CD8-positive, alpha-beta T cell (primary cell): ENCODE measurements at regions of chr21 and their contacts with region 1.

Region 1: DNA sequence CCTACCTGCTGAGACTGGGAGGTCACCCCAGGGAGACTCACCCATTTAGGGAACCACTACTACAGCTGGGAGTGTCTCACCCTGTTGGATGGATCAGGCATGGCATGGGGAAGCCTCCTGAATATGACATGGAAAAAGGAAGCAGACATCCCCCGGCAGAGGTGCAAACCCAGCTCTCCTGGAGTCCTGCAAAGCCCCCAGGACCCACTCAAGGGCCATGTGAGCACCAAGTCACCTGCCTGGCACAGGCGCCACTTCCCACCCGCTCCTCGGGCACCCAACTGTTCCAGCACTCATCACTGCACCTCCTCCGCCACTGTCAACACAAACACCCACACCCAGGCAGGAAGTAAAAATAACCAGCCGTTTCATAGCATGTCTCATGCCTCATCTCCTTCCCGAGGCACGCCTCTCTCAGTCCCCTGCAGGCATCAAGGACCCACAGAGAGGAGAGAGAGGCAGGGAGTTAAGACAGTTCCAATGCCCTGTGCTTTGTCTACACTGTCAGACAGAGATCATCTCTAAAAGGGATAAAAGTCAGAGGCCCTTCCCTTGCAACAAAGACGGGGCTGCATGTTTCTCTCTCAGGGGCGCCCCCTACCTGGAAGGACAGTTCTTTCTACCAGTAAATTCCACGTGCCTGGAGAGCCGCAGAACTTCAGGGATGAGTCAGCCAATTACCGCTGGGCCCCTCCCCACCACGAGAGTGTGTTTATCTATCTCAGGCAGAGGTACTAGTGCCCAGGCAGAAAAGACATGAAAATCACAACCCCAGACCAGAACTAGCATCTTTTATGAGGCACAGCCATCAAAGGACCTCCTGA is 150.1 kb upstream of the SOD1 start:
- DNase-seq: peak; percentile 29 to 74 (median 61)
- ATAC-seq: peak; percentile 81
- H3K4me3 ChIP-seq: no peak overlapping the region
- H3K4me3 Mint-ChIP-seq: peak overlapping the region; percentile 33
- H3K27ac ChIP-seq: no peak overlapping the region
- H3K27ac Mint-ChIP-seq: peak overlapping the region; percentile 1
- H3K4me1 ChIP-seq: peaks cover 23% of the 10 kb centered on the region
- H3K4me1 Mint-ChIP-seq: peaks cover 33% of the 10 kb centered on the region
- H3K27me3 ChIP-seq: no peaks in the 10 kb centered on the region
- H3K27me3 Mint-ChIP-seq: peaks cover 2% of the 10 kb centered on the region
- CTCF ChIP-seq: peak; percentile 36

Region 2: GRCh38 chr21:31198575-31198974 is 310.8 kb before region 1 on chr21:
- CTCF ChIA-PET with region 1: no interaction called
- POLR2A ChIA-PET with region 1: no interaction called
- intact Hi-C with region 1: loop called in 1 of 2 experiments (anchors 5 kb)
- DNase-seq: peak in 2 of 9 experiments; percentile 44 to 63
- ATAC-seq: peak; percentile 44
- H3K4me3 ChIP-seq: no peak overlapping the region
- H3K4me3 Mint-ChIP-seq: no peak overlapping the region
- H3K27ac ChIP-seq: no peak overlapping the region
- H3K27ac Mint-ChIP-seq: no peak overlapping the region
- H3K4me1 ChIP-seq: no peaks in the 10 kb centered on the region
- H3K4me1 Mint-ChIP-seq: peaks cover 18% of the 10 kb centered on the region
- H3K27me3 ChIP-seq: no peaks in the 10 kb centered on the region
- H3K27me3 Mint-ChIP-seq: no peaks in the 10 kb centered on the region
- CTCF ChIP-seq: peak; percentile 72

Region 3: DNA sequence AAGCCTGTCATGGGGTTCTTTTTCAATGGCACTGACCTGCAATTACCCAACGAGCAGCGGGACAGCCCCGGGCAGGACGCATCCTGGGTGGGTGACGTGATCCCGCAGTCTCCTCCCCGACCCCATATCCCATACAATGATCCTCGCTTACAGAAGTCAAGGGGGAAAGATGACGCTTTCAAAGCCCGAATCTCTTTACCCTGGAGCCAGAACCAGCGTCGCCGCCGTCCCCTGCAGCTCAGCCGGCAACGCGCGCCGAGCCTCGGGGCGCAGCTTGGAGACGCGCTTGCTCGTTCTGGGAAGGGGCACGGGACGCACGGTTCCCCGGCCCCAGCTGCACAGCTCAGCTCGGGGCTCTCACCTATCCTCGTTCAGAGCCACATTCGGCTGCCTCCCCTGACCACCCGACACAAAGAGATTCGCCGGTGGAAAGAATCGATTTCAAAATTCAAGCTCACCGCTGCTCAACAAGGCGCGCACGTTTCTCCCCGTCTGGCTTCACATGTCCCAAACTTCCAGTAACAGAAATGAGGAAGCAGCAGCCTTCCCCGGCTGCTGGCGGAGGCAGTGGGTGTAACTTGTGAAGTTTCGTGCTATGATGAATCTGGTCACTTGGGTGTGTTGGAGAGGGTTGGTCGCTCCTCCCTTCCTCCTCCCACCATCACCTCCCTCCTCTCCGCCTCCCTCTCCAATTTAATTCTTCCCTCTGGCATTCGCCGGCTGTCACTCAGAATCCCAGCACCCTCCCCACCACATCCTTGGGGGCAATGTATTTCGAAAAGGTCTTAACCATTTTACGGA is 165.5 kb before region 1 on chr21 and contains the start of gene TIAM1:
- CTCF ChIA-PET with region 1: no interaction called
- POLR2A ChIA-PET with region 1: no interaction called
- intact Hi-C with region 1: loop called in 1 of 2 experiments (anchors 5 kb)
- DNase-seq: peak in 3 of 9 experiments; percentile 8 to 29 (median 12)
- ATAC-seq: no peak
- H3K4me3 ChIP-seq: peak within 1 kb of the TSS; percentile 49 to 55
- H3K4me3 Mint-ChIP-seq: peak within 1 kb of the TSS; percentile 90
- H3K27ac ChIP-seq: no peak within 1 kb of the TSS
- H3K27ac Mint-ChIP-seq: peak within 1 kb of the TSS; percentile 67
- H3K4me1 ChIP-seq: peaks cover 15% of the 10 kb centered on the region
- H3K4me1 Mint-ChIP-seq: peaks cover 35% of the 10 kb centered on the region
- H3K27me3 ChIP-seq: no peaks in the 10 kb centered on the region
- H3K27me3 Mint-ChIP-seq: peaks cover 17% of the 10 kb centered on the region
- CTCF ChIP-seq: no peak
- total RNA-seq, gene TIAM1: 8.0 to 8.5 TPM

Region 4: DNA sequence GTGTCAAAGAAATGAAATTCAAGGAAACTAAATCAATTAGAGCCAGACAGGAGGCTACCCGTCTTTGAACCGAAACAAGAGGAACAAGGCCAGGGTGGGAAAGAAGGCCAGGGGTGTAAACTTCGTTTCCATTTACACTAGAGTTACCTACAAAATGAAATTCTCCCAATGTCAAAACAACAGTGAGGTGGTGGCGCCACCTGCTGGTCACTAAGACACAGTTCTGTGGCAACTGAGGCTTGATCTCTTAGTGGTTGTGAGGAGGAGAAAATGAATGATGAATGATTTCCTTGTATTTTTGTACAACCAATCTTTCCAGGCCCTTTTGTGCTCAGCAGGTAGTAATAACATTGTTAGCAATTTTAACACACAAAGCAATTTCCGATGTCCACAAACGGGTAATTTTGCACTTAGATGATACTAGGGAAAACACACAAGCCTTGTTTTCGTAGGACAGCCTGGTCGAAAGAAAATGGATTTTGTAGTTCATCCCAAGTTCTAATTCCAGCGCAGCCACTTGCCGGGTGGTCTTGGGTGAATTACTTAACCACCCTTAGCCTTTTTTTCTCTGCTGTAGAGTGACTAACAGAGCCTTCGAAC is 95.3 kb after region 1 on chr21:
- CTCF ChIA-PET with region 1: no interaction called
- POLR2A ChIA-PET with region 1: no interaction called
- intact Hi-C with region 1: no loop called
- DNase-seq: peak; percentile 33 to 82 (median 76)
- ATAC-seq: peak; percentile 74
- H3K4me3 ChIP-seq: no peak overlapping the region
- H3K4me3 Mint-ChIP-seq: no peak overlapping the region
- H3K27ac ChIP-seq: no peak overlapping the region
- H3K27ac Mint-ChIP-seq: no peak overlapping the region
- H3K4me1 ChIP-seq: no peaks in the 10 kb centered on the region
- H3K4me1 Mint-ChIP-seq: peaks cover 3% of the 10 kb centered on the region
- H3K27me3 ChIP-seq: no peaks in the 10 kb centered on the region
- H3K27me3 Mint-ChIP-seq: peaks cover 2% of the 10 kb centered on the region
- CTCF ChIP-seq: peak; percentile 89